Mammary epithelial cell (primary cell): ENCODE measurements at regions of chr9 and their contacts with region 1.

Region 1: GRCh38 chr9:26132746-26133312 is 454.6 kb upstream of the TUSC1 start:
- DNase-seq: no peak
- H3K4me3 ChIP-seq: no peak overlapping the region
- H3K27ac ChIP-seq: no peak overlapping the region
- H3K4me1 ChIP-seq: no peaks in the 10 kb centered on the region
- H3K27me3 ChIP-seq: no peaks in the 10 kb centered on the region
- CTCF ChIP-seq: no peak

Region 2: DNA sequence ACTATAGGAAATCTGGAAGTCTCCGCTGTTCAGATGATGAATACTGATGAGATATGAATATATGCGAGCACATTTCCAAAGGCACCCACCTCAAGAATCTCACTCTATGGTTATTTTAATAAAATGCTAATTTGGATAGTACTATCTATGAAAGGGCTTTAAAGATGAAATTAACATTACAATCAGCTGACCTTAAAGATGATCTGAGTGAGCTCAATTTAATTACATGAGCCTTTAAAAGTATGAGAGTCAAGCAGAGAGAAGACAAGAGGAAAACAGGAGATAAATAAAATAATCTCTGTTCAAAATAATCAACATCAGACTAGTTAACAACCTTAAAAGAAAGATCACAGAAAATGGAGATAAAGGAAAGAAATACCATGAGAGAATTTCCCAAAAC is 19.5 kb after region 1 on chr9:
- CTCF ChIA-PET with region 1: interaction called, 21 read pairs
- dilution Hi-C with region 1: no loop called
- in situ Hi-C with region 1: no loop called
- intact Hi-C with region 1: no loop called
- DNase-seq: no peak
- H3K4me3 ChIP-seq: no peak overlapping the region
- H3K27ac ChIP-seq: no peak overlapping the region
- H3K4me1 ChIP-seq: no peaks in the 10 kb centered on the region
- H3K27me3 ChIP-seq: no peaks in the 10 kb centered on the region
- CTCF ChIP-seq: no peak